SK-N-SH (cell line): ENCODE measurements at regions of chr11 and their contacts with region 1.

Region 1: GRCh38 chr11:18088966-18089365 is 16.9 kb downstream of the SAAL1 start:
- DNase-seq: no peak
- H3K4me3 ChIP-seq: no peak overlapping the region
- H3K27ac ChIP-seq: no peak overlapping the region
- H3K4me1 ChIP-seq: no peaks in the 10 kb centered on the region
- H3K27me3 ChIP-seq: no peaks in the 10 kb centered on the region
- CTCF ChIP-seq: no peak
- EP300 ChIP-seq: no peak
- RAD21 ChIP-seq: no peak

Region 2: GRCh38 chr11:18063084-18063483 is 25.9 kb before region 1 on chr11:
- CTCF ChIA-PET with region 1: no interaction called
- POLR2A ChIA-PET with region 1: no interaction called
- DNase-seq: no peak
- H3K4me3 ChIP-seq: no peak overlapping the region
- H3K27ac ChIP-seq: no peak overlapping the region
- H3K4me1 ChIP-seq: no peaks in the 10 kb centered on the region
- H3K27me3 ChIP-seq: no peaks in the 10 kb centered on the region; the same call in 1 of the 2 replicates
- CTCF ChIP-seq: no peak
- EP300 ChIP-seq: no peak
- RAD21 ChIP-seq: no peak

Region 3: GRCh38 chr11:18075444-18075843 is 13.5 kb before region 1 on chr11:
- CTCF ChIA-PET with region 1: no interaction called
- POLR2A ChIA-PET with region 1: no interaction called
- DNase-seq: no peak
- H3K4me3 ChIP-seq: no peak overlapping the region
- H3K27ac ChIP-seq: no peak overlapping the region
- H3K4me1 ChIP-seq: no peaks in the 10 kb centered on the region
- H3K27me3 ChIP-seq: no peaks in the 10 kb centered on the region
- CTCF ChIP-seq: no peak
- EP300 ChIP-seq: no peak
- RAD21 ChIP-seq: no peak

Region 4: DNA sequence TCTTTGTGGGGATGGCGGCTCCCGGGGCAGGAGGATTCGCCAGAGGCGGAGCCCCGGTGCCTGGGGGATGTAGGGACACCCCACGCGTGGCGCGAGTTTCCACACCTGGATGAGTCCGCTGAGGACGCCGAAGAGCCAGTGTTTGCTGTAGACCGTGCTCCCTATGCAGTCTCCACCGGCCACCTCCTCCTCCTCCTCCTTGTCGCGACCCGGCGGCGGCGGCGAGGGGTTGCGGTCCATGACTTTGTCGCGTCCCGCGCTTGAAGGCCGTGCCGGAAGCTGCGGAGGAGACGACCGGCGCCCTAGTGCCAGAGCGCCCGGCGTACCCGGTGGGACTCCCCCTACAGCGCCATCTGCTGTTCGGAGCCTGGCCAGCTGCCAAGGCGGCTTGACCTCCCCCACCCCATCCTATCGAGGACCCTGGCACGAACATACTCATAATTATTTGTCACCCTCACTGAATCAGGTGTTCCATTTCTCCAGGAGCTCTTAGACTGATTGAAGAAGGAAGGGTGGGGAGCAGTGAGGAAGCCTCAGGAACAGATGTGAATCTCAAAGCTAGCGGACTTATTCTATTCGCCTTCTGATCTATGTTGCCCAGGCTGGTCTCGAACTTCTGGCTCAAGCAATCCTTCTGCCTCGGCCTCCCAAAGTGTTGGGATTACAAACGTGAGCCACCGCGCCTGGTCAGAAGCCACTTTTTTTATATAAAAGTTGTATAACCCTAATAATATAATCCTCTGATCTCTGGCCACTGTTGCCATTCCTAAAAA is 17.0 kb after region 1 on chr11 and contains the start of gene SAAL1:
- CTCF ChIA-PET with region 1: interaction called, 11 read pairs
- POLR2A ChIA-PET with region 1: no interaction called
- DNase-seq: peak; percentile 98
- H3K4me3 ChIP-seq: peak within 1 kb of the TSS; percentile 87 to 88
- H3K27ac ChIP-seq: peak within 1 kb of the TSS; percentile 18 to 51; a peak in 1 of 4 replicates
- H3K4me1 ChIP-seq: peaks cover 0 to 9% of the 10 kb centered on the region in 2 experiments; a peak in 2 of 4 replicates
- H3K27me3 ChIP-seq: no peaks in the 10 kb centered on the region
- CTCF ChIP-seq: peak; percentile 86
- EP300 ChIP-seq: no peak; a peak in 1 of 4 replicates
- RAD21 ChIP-seq: 0 out of 2 replicates have a peak, but pooled peaks have one; percentile 26
- polyA plus RNA-seq, gene SAAL1: 17.9 and 19.6 TPM in 2 replicates